ENCODE measurements at regions of chr5 and their contacts with region 1.

Region 1: DNA sequence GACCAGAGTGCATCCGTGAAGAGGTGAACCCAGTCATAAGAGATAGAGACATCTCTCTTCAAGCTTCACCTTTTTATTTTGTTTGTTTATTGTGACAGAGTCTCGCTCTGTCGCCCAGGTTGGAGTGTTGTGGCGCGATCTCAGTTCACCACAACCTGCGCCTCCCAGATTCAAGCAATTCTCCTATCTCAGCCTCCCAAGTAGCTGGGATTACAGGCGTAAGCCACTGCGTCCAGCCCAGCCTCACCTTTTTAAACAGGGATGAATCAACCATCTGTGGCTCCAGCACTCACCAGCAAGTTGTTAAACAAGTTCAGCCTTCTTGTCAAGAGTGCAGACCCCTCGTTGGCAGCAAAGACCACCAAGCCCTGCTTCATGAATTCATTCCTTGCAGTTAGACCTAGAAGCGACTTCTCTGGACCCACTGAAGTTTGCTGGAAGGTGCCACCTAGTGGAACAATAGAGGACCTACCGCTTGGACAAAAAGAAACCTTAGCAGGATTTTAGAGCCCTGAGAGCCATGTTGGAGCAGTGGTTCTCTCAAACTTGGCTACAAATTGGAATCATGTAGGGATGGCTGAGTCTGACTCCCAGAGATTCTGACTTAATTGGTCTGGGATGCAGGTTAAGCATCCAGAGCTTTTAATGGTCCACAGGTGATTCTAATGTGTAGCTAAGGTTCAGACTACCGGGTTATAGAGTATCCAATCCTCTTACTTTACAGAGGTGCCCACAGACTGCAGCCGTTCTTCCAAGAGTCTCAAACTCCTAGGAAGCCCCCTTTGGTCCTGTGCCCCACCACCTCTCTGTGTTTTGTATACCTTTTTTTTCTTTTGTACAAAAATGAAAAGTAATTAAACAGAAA is 10.5 kb upstream of the GALNT10 start:
- DNase-seq: peak; percentile 73
- CTCF ChIP-seq: peak; percentile 72

Region 2: DNA sequence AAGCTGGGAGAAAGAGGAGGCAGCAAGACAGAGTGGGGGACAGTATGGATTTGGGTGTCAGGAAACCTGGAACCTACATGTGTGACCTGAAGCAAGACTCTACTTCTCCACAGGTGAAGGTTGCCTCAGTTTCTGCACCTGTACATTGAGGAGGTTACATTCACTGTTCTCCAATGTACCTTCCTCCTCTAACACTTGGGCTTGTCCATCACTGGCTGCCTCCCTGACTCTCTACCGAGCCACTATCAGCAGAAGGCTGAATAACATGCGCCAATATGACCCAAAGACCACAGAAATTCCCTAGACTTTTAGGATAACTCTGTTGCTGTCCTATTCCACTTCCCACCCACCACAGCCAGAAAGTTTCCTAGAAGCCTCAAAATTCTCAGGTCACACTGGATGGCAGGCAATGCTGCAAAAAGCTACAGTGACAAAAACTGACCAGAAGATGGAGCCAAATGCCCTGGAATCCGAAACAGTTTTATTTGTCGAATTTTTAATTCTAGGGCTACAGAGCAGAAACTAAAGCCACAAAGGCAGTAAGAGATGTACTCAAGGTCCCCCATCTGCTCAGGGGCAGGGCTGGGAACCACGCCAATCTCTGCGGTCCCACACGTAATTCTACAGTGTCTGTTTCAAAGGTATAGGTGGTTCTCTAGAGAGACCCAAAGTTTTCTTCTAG is 205.8 kb before region 1 on chr5:
- CTCF ChIA-PET with region 1: interaction called, 29 read pairs
- POLR2A ChIA-PET with region 1: no interaction called
- DNase-seq: peak; percentile 66
- CTCF ChIP-seq: peak; percentile 79

Region 3: DNA sequence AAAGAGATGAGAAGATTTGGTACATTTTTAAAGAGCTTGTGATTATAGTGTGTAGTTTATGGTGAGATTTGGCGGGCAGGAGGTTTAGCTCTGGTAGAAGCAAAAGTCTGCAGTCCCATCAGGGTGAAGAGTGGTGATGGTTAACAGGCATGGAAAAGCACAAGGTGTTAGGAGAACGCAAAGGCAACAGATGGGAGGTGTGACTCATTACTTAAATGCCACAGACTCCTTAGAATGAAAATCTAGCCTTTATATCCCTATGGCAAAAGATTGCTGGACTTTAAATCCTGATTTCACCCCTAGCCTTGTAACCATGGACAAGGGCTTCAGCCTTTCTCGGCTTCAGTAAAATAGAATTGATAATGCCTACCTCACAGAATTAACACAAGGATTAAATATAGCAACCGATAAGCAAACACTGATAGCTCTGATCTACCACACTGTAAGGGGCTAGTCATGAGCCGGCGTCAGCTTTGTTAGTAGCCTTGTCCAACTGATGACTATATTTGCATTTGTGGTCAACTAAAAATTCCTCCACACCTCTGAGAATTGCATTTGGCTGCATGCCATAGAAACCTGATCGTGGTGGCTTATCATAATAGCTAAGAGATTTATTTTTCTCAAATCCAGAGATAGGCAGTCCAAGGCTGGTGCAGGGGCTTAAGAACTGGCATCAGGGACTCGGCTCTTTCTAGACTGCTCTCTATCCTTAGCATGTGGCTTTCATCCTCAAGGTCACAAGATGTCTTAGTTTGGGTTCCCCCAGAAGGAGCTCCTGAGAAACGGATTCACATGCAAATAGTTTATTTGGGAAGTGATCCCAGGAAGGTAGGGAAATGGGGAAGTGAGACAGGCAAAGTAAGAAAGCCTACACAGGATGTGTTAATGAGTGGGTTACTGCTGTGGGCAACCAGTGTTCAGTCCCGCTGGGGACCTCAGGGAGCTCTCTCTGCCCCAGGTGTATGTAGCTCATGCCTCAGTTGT is 121.7 kb before region 1 on chr5:
- CTCF ChIA-PET with region 1: interaction called, 12 read pairs
- POLR2A ChIA-PET with region 1: no interaction called
- DNase-seq: no peak
- CTCF ChIP-seq: no peak

Region 4: DNA sequence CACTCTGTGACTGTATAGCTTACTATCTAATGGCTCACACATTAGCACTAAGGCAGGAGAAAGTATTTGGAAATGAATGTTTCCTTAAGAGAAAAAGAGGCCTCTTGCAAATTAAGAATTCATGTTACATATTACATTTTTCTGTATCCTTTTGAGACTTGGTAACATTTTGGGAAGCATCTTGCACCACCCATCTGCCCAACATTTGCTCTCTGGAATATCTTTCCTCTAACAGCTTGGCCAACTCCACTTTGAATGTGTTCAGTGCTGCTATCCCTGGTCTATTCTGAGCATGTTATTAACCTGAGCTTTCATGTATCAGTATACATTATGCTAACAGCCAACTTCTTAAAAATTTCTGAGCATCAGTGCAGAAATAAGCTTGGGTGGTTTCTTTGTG is 114.1 kb before region 1 on chr5:
- CTCF ChIA-PET with region 1: interaction called, 10 read pairs
- POLR2A ChIA-PET with region 1: no interaction called
- DNase-seq: no peak
- CTCF ChIP-seq: no peak

Region 5: DNA sequence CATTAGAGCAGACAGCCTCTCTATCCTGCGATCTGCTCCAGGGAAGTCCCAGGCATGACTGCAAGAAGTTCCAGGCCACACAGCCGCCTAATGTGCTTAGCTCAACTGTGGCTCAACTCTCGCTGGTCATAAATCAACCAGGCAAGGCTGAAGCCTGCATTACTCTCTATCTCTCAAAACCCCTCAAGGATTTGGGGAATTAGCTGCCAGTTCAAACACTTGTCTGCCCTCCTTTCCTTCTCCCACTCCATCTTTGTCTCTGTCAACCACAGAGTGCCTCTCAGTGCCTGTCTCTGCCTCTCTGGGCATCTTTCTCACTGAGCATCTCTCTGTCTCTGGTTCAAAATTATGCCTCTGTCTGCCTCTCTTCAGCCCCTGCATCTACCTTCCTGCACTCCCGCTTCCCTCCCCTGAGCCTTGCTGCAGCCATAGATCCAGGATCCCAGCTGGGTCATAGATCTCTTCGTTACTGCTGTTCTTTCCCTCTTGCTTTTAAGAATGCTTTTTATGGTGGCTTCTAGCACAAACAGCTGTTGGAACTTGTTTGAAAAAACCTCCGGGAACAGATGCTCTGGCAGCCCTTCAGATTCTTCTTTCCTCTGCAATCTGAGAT is 17.4 kb before region 1 on chr5:
- CTCF ChIA-PET with region 1: interaction called, 10 read pairs
- POLR2A ChIA-PET with region 1: no interaction called
- DNase-seq: no peak
- CTCF ChIP-seq: no peak